ENCODE measurements at regions of chr5 and their contacts with region 1.

Region 1: GRCh38 chr5:148730943-148731861 is 76.9 kb upstream of the HTR4 start:
- DNase-seq: no peak

Region 2: DNA sequence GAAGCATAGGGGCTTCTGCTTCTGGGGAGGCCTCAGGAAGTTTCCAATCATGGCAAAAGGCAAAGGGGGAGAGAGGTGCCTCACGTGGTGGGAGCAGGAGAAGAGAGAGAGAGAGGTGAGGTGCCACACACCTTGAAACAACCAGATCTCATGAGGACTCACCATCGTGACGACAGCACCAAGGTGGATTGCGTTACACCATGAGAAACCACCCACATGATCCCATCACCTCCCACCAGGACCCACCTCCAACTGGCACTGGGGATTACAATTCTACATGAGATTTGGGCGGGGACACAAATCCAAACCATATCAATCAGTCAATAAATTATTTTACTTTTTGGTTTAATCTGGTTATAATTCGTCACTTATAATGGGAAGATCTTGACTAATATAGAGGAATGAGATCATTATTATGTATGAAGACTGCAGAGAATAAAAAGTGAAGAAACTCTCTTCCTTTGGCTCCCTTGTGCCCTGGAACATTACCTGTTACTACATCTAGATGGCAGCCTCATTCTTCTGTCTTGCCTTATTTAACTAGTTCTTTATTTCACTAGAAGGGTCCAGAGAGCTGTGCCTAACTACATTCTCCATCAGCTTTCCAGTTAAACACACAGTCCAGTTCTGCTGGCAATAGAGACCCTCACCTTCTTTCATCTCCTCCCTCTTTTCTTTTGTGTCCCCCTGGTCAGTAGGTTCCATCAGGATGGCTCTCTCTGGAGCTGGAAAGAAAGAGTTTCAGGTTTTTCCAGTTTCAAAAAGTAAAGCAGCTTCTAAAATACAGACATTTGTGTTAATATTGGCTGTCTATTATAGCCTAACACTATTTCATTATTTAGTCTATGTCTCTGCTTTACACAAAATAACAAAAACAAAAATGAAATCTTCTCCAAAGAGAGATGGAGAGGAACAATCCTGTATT is 440.7 kb before region 1 on chr5:
- intact Hi-C with region 1: loop called (anchors 5 kb)
- DNase-seq: no peak

Region 3: DNA sequence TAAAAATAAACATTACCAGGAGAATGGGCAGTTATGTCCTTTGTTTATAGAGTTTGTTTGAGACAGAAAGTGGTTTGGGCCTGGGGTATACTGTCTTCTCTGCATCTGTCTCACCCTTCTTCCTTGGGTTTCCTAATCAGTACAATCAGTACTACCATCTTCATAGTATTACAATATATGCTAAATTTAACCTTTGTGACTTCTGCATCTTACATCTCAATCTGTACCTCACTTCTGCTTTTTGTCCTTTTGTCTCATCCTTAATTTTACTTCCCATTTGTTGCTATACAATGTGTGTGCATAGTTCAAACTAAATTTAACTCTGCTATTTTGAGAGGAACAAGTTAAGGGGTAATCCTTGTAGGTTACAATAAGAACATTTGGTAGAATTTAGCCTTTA is 327.9 kb before region 1 on chr5:
- intact Hi-C with region 1: no loop called
- DNase-seq: no peak

Region 4: DNA sequence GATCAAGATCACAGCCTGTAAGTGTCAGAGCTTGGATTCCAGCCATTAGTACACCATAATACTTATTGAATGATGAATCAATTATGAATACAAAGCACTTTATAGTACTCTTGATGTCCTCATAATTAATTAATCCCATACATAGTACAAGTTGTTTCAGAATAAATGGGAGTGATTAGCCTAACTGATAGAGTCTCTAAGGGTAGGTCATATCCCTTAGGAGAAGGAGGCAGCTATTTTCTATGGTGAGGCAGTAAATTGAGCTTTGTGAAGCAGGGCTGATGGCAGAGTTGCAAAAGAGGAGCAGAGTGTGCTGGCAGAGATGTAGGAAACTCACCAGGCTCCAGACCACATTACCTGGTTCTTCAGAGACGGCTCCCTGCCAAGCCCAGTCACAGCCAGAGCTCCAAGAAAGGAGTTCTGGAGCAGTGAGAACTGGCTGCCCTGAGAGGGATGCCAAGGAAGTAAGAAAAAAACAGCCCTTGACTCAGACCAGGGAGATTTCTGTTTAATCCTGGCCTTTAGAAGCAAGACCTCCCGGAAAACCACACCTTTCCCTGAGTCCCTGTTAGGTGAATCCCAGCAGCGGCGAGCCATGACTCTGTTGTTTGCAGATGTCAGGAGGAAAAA is 218.8 kb after region 1 on chr5:
- intact Hi-C with region 1: no loop called
- DNase-seq: no peak

Region 5: GRCh38 chr5:148998174-148998797 is 267.1 kb after region 1 on chr5:
- intact Hi-C with region 1: loop called (anchors 2 kb)
- DNase-seq: no peak

Region 6: GRCh38 chr5:149114403-149115312 is 383.5 kb after region 1 on chr5:
- intact Hi-C with region 1: loop called (anchors 5 kb)
- DNase-seq: no peak